Activated naive CD4-positive, alpha-beta T cell treated with anti-CD3 and anti-CD28 coated beads for 36 hours (primary cell): ENCODE measurements at regions of chr2 and their contacts with region 1.

Region 1: GRCh38 chr2:204024503-204024902 is 87.9 kb downstream of the ICOS start:
- DNase-seq: peak; percentile 71
- H3K4me3 Mint-ChIP-seq: no peak overlapping the region
- H3K27ac Mint-ChIP-seq: no peak overlapping the region
- H3K4me1 Mint-ChIP-seq: peaks cover 51% of the 10 kb centered on the region
- H3K27me3 Mint-ChIP-seq: no peaks in the 10 kb centered on the region

Region 2: DNA sequence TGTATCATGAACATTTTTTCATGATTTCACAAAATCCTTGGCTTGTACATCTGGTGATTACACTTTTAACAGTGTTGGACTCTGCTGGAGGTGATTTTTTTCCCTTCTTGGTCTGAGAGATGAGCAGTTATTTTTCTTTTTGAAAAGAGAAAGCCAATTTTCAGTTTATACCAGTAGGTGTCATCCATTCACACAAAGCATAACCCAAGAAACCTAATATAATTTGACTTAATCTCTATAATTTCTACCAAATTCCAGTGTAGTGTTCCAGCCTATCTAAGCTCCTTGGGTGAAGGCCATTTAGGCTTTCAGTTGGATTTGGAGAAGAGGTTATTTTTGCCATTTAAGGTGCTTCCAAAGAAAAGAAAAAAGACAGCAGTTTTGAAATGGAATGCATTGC is 95.7 kb before region 1 on chr2:
- CTCF ChIA-PET with region 1: interaction called, 10 read pairs
- intact Hi-C with region 1: loop called (anchors 1 kb)
- DNase-seq: no peak
- H3K4me3 Mint-ChIP-seq: no peak overlapping the region
- H3K27ac Mint-ChIP-seq: no peak overlapping the region
- H3K4me1 Mint-ChIP-seq: peaks cover 43% of the 10 kb centered on the region
- H3K27me3 Mint-ChIP-seq: no peaks in the 10 kb centered on the region

Region 3: DNA sequence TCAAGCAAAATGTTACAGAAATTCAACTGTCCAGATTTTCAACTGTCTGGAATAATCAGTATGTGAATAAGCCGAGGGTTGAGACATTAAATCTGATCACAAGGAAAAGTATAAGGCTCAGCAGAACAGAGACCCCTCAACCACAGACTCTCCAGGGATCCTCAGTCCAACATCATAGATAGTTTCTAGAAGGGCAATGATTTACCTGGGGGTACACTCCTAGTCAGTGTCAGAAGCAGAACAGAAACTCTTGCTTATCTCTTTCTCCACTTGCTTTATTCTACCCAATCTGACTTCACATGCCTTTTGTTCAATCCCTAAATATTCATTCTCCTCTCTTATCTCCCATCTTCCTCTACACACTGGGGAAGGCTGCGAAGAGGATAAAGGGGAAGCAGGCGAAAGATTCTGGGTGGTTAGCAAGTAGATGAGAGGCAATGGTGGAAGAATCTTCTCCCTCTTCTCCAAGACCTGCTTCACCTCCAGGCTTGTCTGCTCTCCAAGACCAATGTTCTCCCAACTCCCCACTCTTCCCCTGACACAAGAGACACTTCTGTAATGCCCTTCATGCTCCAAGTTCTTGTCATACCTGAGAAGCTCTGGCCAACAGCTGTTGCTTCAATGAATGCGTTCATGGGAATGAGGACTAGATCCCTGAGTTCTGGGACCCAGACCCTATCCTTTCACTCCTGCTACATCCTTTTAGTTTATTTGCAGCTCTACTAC is 51.3 kb before region 1 on chr2:
- CTCF ChIA-PET with region 1: interaction called, 3 read pairs
- intact Hi-C with region 1: loop called (anchors 1 kb)
- DNase-seq: no peak
- H3K4me3 Mint-ChIP-seq: no peak overlapping the region
- H3K27ac Mint-ChIP-seq: no peak overlapping the region
- H3K4me1 Mint-ChIP-seq: peaks cover 17% of the 10 kb centered on the region
- H3K27me3 Mint-ChIP-seq: no peaks in the 10 kb centered on the region

Region 4: DNA sequence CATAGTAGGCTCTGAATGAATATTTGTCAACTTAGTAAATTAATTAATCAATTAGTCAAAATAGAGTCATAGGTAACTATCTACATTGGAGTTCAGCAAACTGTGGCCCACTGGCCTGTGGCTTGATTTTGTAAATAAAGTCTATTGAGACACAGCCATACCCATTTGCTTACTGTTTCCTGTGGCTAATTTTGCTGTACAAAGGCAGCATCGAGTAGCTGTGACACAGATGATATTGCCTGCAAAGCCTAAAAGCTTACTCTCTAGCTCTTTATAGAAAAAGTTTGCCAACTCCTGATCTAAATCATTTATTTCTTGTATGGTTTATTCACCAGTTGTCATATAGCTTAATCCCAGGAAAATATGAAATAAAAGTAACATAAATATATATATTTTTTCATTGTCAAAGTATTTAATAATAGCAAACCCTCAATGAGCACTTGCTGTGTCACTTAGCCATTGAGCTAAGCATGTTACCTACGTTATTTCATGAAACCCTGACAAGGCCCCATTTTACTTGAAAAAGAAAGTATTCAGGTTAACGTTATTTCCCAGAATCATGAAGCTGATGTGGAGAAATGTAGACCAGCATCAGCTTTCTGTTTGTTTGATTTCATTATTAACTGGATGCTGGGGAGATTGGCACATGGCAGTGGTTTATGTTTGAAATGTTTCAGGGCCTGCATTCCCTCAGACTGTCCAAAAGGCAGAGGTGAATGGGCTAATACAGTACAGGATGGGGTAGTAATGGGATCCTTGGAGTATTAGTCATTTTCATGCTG is 18.4 kb before region 1 on chr2:
- CTCF ChIA-PET with region 1: interaction called, 3 read pairs
- intact Hi-C with region 1: loop called (anchors 1 kb)
- DNase-seq: peak; percentile 40
- H3K4me3 Mint-ChIP-seq: no peak overlapping the region
- H3K27ac Mint-ChIP-seq: peak overlapping the region; percentile 96
- H3K4me1 Mint-ChIP-seq: peaks cover 95% of the 10 kb centered on the region
- H3K27me3 Mint-ChIP-seq: no peaks in the 10 kb centered on the region

Region 5: GRCh38 chr2:204145263-204145751 is 120.8 kb after region 1 on chr2:
- CTCF ChIA-PET with region 1: interaction called, 3 read pairs
- intact Hi-C with region 1: loop called (anchors 1 kb)
- DNase-seq: peak; percentile 90
- H3K4me3 Mint-ChIP-seq: peak overlapping the region; percentile 65
- H3K27ac Mint-ChIP-seq: peak overlapping the region; percentile 22
- H3K4me1 Mint-ChIP-seq: peaks cover 9% of the 10 kb centered on the region
- H3K27me3 Mint-ChIP-seq: peaks cover 5% of the 10 kb centered on the region

Region 6: DNA sequence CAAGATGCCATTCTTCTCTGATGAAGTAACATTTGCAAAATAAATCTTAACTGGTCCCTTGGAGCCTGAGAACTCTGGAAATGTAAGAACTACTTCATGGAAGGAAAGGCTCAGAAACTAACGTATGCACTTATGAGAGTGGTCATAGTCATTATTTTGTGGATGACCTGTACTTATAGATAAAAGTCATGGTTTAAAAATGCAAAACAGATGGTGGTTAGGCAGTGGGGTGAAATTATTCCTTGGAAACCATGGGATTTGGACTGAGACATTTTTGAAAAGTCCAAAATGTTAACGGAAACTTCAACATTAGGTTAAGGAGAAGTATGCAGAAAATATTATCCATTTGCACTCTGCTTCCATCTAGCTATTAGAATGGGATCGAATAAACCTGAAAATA is 135.0 kb after region 1 on chr2:
- CTCF ChIA-PET with region 1: no interaction called
- intact Hi-C with region 1: no loop called
- DNase-seq: no peak
- H3K4me3 Mint-ChIP-seq: no peak overlapping the region
- H3K27ac Mint-ChIP-seq: no peak overlapping the region
- H3K4me1 Mint-ChIP-seq: no peaks in the 10 kb centered on the region
- H3K27me3 Mint-ChIP-seq: peaks cover 5% of the 10 kb centered on the region

Region 7: DNA sequence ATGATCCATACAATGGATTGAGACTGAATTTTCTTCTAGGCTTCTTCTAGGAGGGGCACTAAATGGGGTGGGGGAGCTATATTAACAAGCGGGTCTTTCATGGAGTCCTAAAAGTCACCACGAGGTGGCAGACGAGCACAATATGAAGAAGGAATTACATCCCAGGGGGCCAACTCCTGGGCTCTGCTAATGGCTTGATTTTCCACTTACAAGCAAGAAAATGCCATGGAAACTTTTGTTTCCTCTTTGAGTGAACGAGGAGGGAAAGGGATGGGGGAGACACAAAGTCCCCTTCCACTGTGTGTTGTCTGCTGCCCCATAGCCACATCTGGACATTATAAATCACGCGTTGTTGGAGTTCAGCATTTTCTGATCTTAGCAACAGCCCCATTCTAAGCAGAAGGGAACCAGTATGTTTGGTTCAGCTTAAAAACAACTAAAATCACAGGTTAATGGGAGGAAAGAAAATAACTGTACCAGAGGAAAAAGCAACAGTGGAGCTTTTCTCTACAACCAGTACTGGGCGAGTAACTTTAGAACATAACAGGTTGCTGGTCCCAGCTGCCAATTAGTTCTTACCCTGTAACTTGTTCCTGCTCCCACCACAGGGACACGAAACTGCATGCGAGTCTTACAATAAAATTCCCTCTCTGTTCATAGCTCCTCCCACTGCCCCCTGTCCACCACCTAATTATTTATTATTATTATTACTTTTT is 235.8 kb after region 1 on chr2:
- CTCF ChIA-PET with region 1: interaction called, 3 read pairs
- intact Hi-C with region 1: loop called (anchors 5 kb)
- DNase-seq: peak; percentile 68
- H3K4me3 Mint-ChIP-seq: no peak overlapping the region
- H3K27ac Mint-ChIP-seq: no peak overlapping the region
- H3K4me1 Mint-ChIP-seq: no peaks in the 10 kb centered on the region
- H3K27me3 Mint-ChIP-seq: peaks cover 16% of the 10 kb centered on the region

Region 8: GRCh38 chr2:205680067-205680466 is 1655.6 kb after region 1 on chr2:
- CTCF ChIA-PET with region 1: no interaction called
- intact Hi-C with region 1: loop called (anchors 5 kb)
- DNase-seq: peak; percentile 73
- H3K4me3 Mint-ChIP-seq: no peak overlapping the region
- H3K27ac Mint-ChIP-seq: no peak overlapping the region
- H3K4me1 Mint-ChIP-seq: peaks cover 19% of the 10 kb centered on the region
- H3K27me3 Mint-ChIP-seq: peaks cover 36% of the 10 kb centered on the region